ENCODE measurements at regions of chr21 and their contacts with region 1.

Region 1: GRCh38 chr21:41926117-41926806 is 27.6 kb downstream of the C2CD2 start:
- DNase-seq: peak; percentile 48 to 70 (median 60)
- H3K4me3 ChIP-seq: peak overlapping the region; percentile 45 to 66
- H3K4me3 Mint-ChIP-seq: peak overlapping the region; percentile 93 to 100 (median 96)
- H3K27ac ChIP-seq: peak overlapping the region; percentile 74
- H3K27ac Mint-ChIP-seq: peak overlapping the region; percentile 90 to 100 (median 99)
- H3K4me1 ChIP-seq: peaks cover 37% of the 10 kb centered on the region
- H3K4me1 Mint-ChIP-seq: peaks cover 27 to 48% (median 36%) of the 10 kb centered on the region in 4 donors
- H3K27me3 ChIP-seq: no peaks in the 10 kb centered on the region
- H3K27me3 Mint-ChIP-seq: peaks cover 0 to 2% of the 10 kb centered on the region in 2 donors

Region 2: GRCh38 chr21:41879190-41879998 is 46.9 kb before region 1 on chr21 and contains the start of gene PRDM15:
- CTCF ChIA-PET with region 1: interaction called, 4 read pairs
- POLR2A ChIA-PET with region 1: interaction called, 53 read pairs
- intact Hi-C with region 1: loop called (anchors 1 kb)
- DNase-seq: peak; percentile 73 to 81 (median 75)
- H3K4me3 ChIP-seq: peak within 1 kb of the TSS; percentile 60 to 74
- H3K4me3 Mint-ChIP-seq: peak within 1 kb of the TSS; percentile 90 to 93 (median 92)
- H3K27ac ChIP-seq: peak within 1 kb of the TSS; percentile 69
- H3K27ac Mint-ChIP-seq: peak within 1 kb of the TSS; percentile 85 to 97 (median 96)
- H3K4me1 ChIP-seq: peaks cover 26% of the 10 kb centered on the region
- H3K4me1 Mint-ChIP-seq: peaks cover 14 to 37% (median 27%) of the 10 kb centered on the region in 4 donors
- H3K27me3 ChIP-seq: no peaks in the 10 kb centered on the region
- H3K27me3 Mint-ChIP-seq: no peaks in the 10 kb centered on the region
- total RNA-seq, gene PRDM15: 14.2 to 14.3 TPM

Region 3: DNA sequence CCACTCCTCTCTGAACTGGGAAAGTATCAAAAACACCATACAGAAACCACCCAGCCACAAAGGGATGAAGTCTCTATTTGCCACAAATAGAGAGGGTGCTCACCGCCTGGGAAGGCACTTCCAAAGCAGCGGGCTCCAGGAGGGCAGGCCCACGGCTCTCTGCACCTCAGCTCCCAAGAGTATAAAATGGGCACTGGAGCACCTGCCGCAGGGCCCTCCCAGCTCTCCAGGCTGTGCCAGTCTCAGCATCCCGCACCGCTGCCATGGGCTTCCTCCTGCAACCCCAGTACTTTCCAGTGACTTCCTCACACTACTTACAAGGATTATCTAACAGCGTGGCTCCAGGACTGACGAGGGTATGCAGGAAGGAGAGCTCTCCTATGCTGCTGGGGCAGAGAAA is 13.1 kb after region 1 on chr21:
- CTCF ChIA-PET with region 1: no interaction called
- POLR2A ChIA-PET with region 1: no interaction called
- intact Hi-C with region 1: no loop called
- DNase-seq: no peak
- H3K4me3 ChIP-seq: no peak overlapping the region
- H3K4me3 Mint-ChIP-seq: no peak overlapping the region
- H3K27ac ChIP-seq: no peak overlapping the region
- H3K27ac Mint-ChIP-seq: no peak overlapping the region
- H3K4me1 ChIP-seq: no peaks in the 10 kb centered on the region
- H3K4me1 Mint-ChIP-seq: no peaks in the 10 kb centered on the region
- H3K27me3 ChIP-seq: no peaks in the 10 kb centered on the region
- H3K27me3 Mint-ChIP-seq: peaks cover 0 to 8% of the 10 kb centered on the region in 2 donors

Region 4: GRCh38 chr21:42002421-42002958 is 76.2 kb after region 1 on chr21:
- CTCF ChIA-PET with region 1: interaction called, 3 read pairs
- POLR2A ChIA-PET with region 1: no interaction called
- intact Hi-C with region 1: loop called (anchors 2 kb)
- DNase-seq: peak; percentile 14 to 84 (median 28)
- H3K4me3 ChIP-seq: no peak overlapping the region
- H3K4me3 Mint-ChIP-seq: peak overlapping the region; percentile 25 to 81 (median 70)
- H3K27ac ChIP-seq: no peak overlapping the region
- H3K27ac Mint-ChIP-seq: peak overlapping the region in 6 of 7 donors; percentile 38 to 92 (median 70)
- H3K4me1 ChIP-seq: peaks cover 30% of the 10 kb centered on the region
- H3K4me1 Mint-ChIP-seq: peaks cover 28 to 58% (median 37%) of the 10 kb centered on the region in 4 donors
- H3K27me3 ChIP-seq: no peaks in the 10 kb centered on the region
- H3K27me3 Mint-ChIP-seq: no peaks in the 10 kb centered on the region

Measured in CD4-positive, alpha-beta memory T cell (primary cell).